H1 (cell line): ENCODE measurements at regions of chr6 and their contacts with region 1.

Region 1: GRCh38 chr6:9412951-9413559 is 977.7 kb upstream of the SLC35B3 start:
- DNase-seq: no peak
- H3K4me3 ChIP-seq: no peak overlapping the region
- H3K27ac ChIP-seq: no peak overlapping the region
- H3K4me1 ChIP-seq: no peaks in the 10 kb centered on the region
- H3K27me3 ChIP-seq: no peaks in the 10 kb centered on the region
- CTCF ChIP-seq: peak; percentile 60 to 73 (median 69)
- EP300 ChIP-seq: no peak
- POLR2A ChIP-seq: no peak
- RAD21 ChIP-seq: peak; percentile 62 to 71

Region 2: GRCh38 chr6:9250852-9251251 is 162.2 kb before region 1 on chr6:
- CTCF ChIA-PET with region 1: interaction called, 10 read pairs
- POLR2A ChIA-PET with region 1: no interaction called
- DNase-seq: peak; percentile 34 to 64
- H3K4me3 ChIP-seq: no peak overlapping the region
- H3K27ac ChIP-seq: no peak overlapping the region
- H3K4me1 ChIP-seq: no peaks in the 10 kb centered on the region
- H3K27me3 ChIP-seq: no peaks in the 10 kb centered on the region
- CTCF ChIP-seq: peak; percentile 68 to 89 (median 75)
- EP300 ChIP-seq: no peak
- POLR2A ChIP-seq: no peak
- RAD21 ChIP-seq: peak; percentile 96 to 97

Region 3: DNA sequence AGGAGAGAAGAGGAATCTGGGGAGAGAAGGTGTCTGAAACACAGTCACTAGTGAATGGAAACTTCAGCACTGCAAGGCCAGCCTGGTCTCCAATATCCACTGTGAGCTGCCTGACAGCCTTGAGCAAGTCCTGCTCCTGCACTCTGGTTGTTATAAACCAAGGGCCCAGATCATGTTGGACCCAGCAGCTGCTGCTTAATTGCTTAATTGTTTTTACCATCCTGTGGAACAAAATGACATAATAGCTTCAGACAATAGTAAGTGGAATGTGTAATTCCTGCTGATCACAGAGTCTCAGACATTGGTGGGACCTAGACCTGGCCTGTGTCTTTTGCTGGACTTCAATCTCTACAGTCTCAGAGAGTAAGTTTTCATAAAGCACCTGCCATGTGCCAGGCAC is 168.1 kb after region 1 on chr6:
- CTCF ChIA-PET with region 1: no interaction called
- POLR2A ChIA-PET with region 1: no interaction called
- DNase-seq: no peak
- H3K4me3 ChIP-seq: no peak overlapping the region
- H3K27ac ChIP-seq: no peak overlapping the region
- H3K4me1 ChIP-seq: no peaks in the 10 kb centered on the region
- H3K27me3 ChIP-seq: no peaks in the 10 kb centered on the region
- CTCF ChIP-seq: no peak
- EP300 ChIP-seq: no peak
- POLR2A ChIP-seq: no peak
- RAD21 ChIP-seq: no peak